Endothelial cell of umbilical vein (primary cell): ENCODE measurements at regions of chr12 and their contacts with region 1.

Region 1: DNA sequence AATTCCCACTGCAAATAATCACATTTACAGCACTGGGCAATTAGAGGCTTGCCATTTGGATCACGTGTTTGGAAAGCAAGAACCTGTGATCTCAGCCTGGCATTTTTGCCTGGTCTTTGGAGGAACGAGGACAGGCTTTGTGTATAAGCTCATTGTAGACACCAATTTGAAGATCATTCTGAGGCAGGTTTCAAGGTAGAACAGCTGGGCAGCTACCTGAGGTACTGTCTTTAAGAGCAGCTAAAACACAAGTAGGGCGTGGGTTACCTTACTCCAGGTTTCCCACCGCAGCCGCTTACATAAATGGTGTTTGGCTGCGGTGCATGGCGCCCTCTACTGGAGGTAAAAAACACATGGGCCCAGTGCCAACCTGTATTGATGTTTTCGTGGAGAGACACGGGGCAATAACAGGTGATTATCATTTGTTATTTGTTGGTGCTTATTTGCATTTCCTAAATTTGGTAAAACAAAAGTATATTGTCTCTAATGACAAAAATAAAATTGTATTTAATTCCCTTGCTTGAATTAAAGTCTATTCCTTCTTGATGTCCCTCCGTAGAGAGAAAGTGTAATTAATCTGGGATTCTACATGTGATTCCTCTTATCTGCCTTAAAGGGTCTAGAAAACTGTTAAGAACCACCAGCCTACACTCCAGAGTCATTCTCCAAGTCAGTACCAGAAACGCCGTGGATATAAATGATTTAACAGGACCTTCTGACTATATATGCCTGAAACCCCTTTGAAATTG is 69.7 kb downstream of the SVOP start:
- DNase-seq: peak; percentile 80
- H3K4me3 ChIP-seq: no peak overlapping the region
- H3K27ac ChIP-seq: no peak overlapping the region
- H3K4me1 ChIP-seq: no peaks in the 10 kb centered on the region
- H3K27me3 ChIP-seq: no peaks in the 10 kb centered on the region
- CTCF ChIP-seq: peak; percentile 74 to 80
- POLR2A ChIP-seq: no peak

Region 2: DNA sequence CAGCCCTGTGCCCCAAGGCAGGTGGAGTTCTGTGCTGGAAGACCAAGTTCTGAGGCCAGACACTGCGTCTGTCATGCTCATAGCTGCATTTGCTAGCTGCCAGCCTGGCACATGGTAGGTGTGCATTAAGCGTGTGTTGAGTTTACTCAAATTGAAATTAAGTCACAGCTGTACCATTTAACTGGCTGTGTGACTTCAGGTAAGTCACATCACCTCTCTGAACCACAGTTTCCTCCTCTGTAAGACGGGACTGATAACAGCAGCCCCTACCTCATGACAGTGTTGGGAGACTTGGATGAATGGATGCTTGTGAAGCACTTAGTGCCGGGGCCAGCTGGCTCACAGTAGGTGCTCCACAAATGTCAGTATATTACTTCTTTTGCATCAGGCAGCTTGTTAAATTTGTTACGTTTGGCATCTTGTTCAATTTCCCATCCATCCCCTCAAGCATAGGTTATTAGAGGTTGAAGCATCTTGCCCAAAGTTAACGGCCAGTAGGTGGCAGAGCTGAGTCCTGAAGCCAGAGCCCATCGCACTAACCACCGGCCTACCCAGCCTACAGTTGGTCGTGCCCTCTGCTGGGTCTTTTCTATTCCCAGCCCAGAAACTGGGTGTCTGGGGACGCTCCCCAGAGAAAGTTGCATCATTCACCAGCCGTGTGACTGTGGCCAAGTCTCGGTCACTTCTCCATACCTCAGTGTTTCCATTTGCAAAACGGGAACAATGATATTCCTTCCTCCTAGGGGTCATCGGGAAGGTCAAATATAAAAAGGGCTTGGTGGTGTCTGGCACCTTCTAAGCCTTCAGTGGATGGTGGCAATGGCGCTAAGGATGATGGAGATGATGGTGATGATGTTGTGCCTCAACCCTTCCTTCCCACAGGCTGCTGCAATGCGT is 66.8 kb before region 1 on chr12:
- CTCF ChIA-PET with region 1: interaction called, 15 read pairs
- POLR2A ChIA-PET with region 1: no interaction called
- dilution Hi-C with region 1: no loop called
- intact Hi-C with region 1: loop called (anchors 1 kb)
- DNase-seq: peak; percentile 28
- H3K4me3 ChIP-seq: no peak overlapping the region
- H3K27ac ChIP-seq: no peak overlapping the region
- H3K4me1 ChIP-seq: no peaks in the 10 kb centered on the region
- H3K27me3 ChIP-seq: no peaks in the 10 kb centered on the region
- CTCF ChIP-seq: peak; percentile 60 to 78
- POLR2A ChIP-seq: no peak

Region 3: GRCh38 chr12:108910336-108910735 is 40.8 kb before region 1 on chr12:
- CTCF ChIA-PET with region 1: no interaction called
- POLR2A ChIA-PET with region 1: no interaction called
- dilution Hi-C with region 1: no loop called
- intact Hi-C with region 1: no loop called
- DNase-seq: no peak
- H3K4me3 ChIP-seq: no peak overlapping the region
- H3K27ac ChIP-seq: no peak overlapping the region
- H3K4me1 ChIP-seq: no peaks in the 10 kb centered on the region
- H3K27me3 ChIP-seq: peaks cover 0 to 1% of the 10 kb centered on the region in 2 experiments
- CTCF ChIP-seq: no peak
- POLR2A ChIP-seq: no peak

Region 4: GRCh38 chr12:109752117-109753053 is 801.2 kb after region 1 on chr12:
- CTCF ChIA-PET with region 1: no interaction called
- POLR2A ChIA-PET with region 1: no interaction called
- dilution Hi-C with region 1: no loop called
- intact Hi-C with region 1: no loop called
- DNase-seq: no peak
- H3K4me3 ChIP-seq: no peak overlapping the region
- H3K27ac ChIP-seq: no peak overlapping the region
- H3K4me1 ChIP-seq: no peaks in the 10 kb centered on the region
- H3K27me3 ChIP-seq: no peaks in the 10 kb centered on the region
- CTCF ChIP-seq: no peak
- POLR2A ChIP-seq: no peak